MCF 10A (cell line): ENCODE measurements at regions of chr5 and their contacts with region 1.

Region 1: GRCh38 chr5:134436523-134437339 is 25.1 kb upstream of the CDKN2AIPNL start:
- DNase-seq: peak; percentile 96
- H3K4me3 Mint-ChIP-seq: peak overlapping the region; percentile 63
- H3K27ac Mint-ChIP-seq: peak overlapping the region; percentile 98
- H3K4me1 Mint-ChIP-seq: peaks cover 72% of the 10 kb centered on the region
- H3K27me3 Mint-ChIP-seq: no peaks in the 10 kb centered on the region
- CTCF ChIP-seq: no peak

Region 2: GRCh38 chr5:133467335-133467779 is 969.4 kb before region 1 on chr5:
- CTCF ChIA-PET with region 1: no interaction called
- POLR2A ChIA-PET with region 1: no interaction called
- intact Hi-C with region 1: no loop called
- DNase-seq: no peak
- H3K4me3 Mint-ChIP-seq: no peak overlapping the region
- H3K27ac Mint-ChIP-seq: no peak overlapping the region
- H3K4me1 Mint-ChIP-seq: no peaks in the 10 kb centered on the region
- H3K27me3 Mint-ChIP-seq: peaks cover 15% of the 10 kb centered on the region
- CTCF ChIP-seq: no peak

Region 3: DNA sequence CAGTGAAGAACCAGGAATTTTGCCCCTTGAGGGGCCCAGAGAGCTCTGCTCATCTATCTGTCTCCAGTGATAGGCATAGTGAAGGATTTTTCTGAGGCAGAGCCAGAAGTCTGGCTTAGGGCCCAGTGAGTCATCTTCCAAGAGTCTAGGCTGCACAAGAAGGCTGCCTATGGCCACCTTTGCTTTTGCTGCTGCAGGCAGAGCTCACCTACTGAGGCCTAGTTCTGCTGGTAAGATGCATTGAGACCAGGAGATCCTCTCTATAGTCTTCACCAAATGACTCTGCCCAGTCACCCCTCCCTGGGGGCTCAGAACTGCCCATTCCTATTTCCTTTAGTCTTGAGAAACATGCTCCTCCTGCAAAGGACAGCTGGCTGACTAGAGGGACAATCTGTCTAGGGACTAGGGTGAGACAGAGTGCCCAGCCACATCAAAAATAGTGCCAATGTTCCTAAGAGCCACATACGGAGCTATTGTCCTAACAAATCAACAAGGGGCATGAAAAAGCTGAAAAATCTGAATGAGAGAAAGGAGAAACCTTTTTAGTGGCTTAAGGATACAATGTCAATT is 15.3 kb after region 1 on chr5:
- CTCF ChIA-PET with region 1: interaction called, 3 read pairs
- POLR2A ChIA-PET with region 1: interaction called, 22 read pairs
- intact Hi-C with region 1: no loop called
- DNase-seq: peak; percentile 94
- H3K4me3 Mint-ChIP-seq: no peak overlapping the region
- H3K27ac Mint-ChIP-seq: no peak overlapping the region
- H3K4me1 Mint-ChIP-seq: peaks cover 24% of the 10 kb centered on the region
- H3K27me3 Mint-ChIP-seq: no peaks in the 10 kb centered on the region
- CTCF ChIP-seq: no peak

Region 4: DNA sequence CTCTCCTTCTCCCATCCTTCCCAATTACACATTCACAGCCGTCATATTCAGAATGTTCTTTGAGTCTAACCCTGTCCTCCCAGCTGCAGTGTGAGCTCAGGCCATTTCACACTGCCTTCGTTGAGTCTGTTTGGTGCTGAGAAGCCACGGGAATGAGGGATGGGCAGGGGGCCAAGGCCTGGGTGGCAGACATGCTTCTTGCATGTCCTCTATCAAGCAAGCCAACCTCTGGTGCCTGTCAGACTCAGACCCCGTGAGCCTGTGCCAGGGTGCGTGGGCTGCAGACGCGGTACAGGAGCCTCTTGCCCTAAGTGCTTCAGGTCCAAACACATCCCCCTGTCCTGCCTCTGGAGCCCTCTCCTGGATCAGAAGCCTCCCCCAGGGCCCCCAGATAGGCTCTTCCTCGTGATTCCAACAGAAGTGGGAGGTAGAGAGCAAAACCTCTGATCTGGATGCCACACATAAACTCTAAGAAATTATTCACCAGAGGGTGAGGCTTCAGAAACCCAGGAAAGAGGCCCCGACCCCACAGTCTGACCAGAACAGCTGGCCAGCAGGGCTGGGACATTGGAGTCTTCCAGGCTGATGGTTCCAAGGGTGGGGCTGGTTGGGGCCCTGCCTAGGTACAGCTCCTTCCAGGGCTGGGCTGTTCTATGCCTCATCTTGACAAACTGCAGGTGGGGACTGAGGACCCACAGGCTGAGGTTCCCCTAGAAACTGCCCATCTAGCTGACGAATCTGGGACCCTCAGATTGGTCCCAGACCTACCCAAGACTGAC is 21.7 kb after region 1 on chr5:
- CTCF ChIA-PET with region 1: interaction called, 3 read pairs
- POLR2A ChIA-PET with region 1: interaction called, 321 read pairs
- intact Hi-C with region 1: no loop called
- DNase-seq: peak; percentile 52
- H3K4me3 Mint-ChIP-seq: no peak overlapping the region
- H3K27ac Mint-ChIP-seq: peak overlapping the region; percentile 68
- H3K4me1 Mint-ChIP-seq: peaks cover 37% of the 10 kb centered on the region
- H3K27me3 Mint-ChIP-seq: no peaks in the 10 kb centered on the region
- CTCF ChIP-seq: no peak

Region 5: DNA sequence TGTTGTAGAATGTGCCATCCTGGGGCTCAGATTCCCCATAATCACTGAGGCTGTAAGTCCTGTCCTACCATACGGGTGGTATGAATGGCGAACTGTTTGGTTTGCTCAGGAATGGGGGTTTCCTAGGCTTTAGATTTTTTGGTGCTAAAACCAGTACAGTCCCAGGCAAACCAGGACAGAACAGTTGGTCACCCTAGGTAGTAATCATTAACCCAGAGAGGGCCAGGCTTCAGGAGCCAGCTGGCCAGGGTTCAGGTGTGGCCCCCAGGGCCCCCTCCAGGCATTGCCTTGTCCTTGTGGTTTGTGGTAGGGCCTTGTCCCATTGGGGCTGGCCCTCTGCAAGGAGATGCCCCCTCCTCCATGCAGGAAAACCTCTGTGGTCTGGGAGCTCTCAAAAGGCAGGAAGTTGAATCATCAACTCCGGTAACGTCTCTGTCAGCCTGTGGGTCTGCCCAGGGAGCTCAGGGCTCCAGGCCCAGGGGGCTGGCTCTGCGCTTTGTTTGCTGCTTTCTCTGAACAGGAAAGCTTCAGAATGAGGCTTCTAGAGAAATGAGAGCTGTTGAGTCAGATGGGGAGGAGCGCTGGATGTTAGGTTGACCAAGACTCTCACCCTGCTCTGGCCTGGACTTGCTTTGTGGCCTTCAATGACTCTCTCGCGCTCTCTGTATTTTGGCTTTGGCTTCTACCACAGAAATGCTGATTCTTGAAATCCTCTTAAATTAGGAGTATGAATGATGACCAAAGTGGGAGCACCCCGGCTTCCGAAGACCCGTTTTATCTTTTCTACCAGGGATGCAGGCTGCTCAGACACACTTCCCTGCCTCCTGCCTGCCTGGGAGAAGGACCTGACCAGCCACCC is 66.6 kb after region 1 on chr5:
- CTCF ChIA-PET with region 1: interaction called, 5 read pairs
- POLR2A ChIA-PET with region 1: interaction called, 85 read pairs
- intact Hi-C with region 1: loop called (anchors 2 kb)
- DNase-seq: peak; percentile 100
- H3K4me3 Mint-ChIP-seq: peak overlapping the region; percentile 10
- H3K27ac Mint-ChIP-seq: peak overlapping the region; percentile 90
- H3K4me1 Mint-ChIP-seq: peaks cover 45% of the 10 kb centered on the region
- H3K27me3 Mint-ChIP-seq: no peaks in the 10 kb centered on the region
- CTCF ChIP-seq: no peak